ENCODE measurements at regions of chr18 and their contacts with region 1.

Region 1: DNA sequence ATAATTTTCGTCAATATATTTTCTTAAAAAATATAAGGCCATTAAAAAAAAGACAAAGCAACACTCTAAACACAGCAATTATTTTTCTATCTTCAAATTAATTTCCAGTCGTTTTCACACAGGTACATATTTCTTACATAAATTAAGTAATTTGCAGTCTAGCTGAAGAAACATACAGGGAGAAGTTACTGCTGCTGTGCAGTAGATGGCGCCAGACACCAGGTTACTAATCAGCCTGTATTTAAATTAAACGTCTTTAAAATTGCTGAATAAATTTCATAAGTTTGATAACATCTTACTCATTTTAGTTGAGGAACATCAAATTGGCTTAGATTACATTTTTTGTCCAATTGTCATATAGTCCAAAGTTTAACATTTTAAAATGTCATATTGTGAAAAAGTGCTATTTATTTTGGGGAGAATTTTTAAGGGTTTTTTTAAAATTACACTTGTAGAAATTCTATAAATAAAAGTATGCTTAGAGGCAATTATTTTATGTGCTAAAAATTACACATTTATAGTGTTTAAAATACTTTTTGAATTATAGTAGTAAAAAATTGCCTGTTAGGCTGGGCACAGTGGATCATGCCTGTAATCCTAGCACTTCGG is 88.4 kb downstream of the PMAIP1 start:
- DNase-seq: peak in 7 of 9 experiments; percentile 14 to 67 (median 40)
- ATAC-seq: peak; percentile 58
- H3K4me3 ChIP-seq: no peak overlapping the region
- H3K4me3 Mint-ChIP-seq: no peak overlapping the region
- H3K27ac ChIP-seq: no peak overlapping the region
- H3K27ac Mint-ChIP-seq: no peak overlapping the region
- H3K4me1 ChIP-seq: no peaks in the 10 kb centered on the region
- H3K4me1 Mint-ChIP-seq: no peaks in the 10 kb centered on the region
- H3K27me3 ChIP-seq: no peaks in the 10 kb centered on the region
- H3K27me3 Mint-ChIP-seq: peaks cover 8% of the 10 kb centered on the region
- CTCF ChIP-seq: peak; percentile 99

Region 2: GRCh38 chr18:59837586-59837985 is 150.6 kb before region 1 on chr18:
- CTCF ChIA-PET with region 1: interaction called, 3 read pairs
- POLR2A ChIA-PET with region 1: no interaction called
- intact Hi-C with region 1: loop called in 1 of 2 experiments (anchors 10 kb)
- DNase-seq: peak in 7 of 9 experiments; percentile 24 to 70 (median 46)
- ATAC-seq: no peak
- H3K4me3 ChIP-seq: no peak overlapping the region
- H3K4me3 Mint-ChIP-seq: no peak overlapping the region
- H3K27ac ChIP-seq: no peak overlapping the region
- H3K27ac Mint-ChIP-seq: no peak overlapping the region
- H3K4me1 ChIP-seq: no peaks in the 10 kb centered on the region
- H3K4me1 Mint-ChIP-seq: no peaks in the 10 kb centered on the region
- H3K27me3 ChIP-seq: no peaks in the 10 kb centered on the region
- H3K27me3 Mint-ChIP-seq: peaks cover 4% of the 10 kb centered on the region
- CTCF ChIP-seq: peak; percentile 91

Region 3: DNA sequence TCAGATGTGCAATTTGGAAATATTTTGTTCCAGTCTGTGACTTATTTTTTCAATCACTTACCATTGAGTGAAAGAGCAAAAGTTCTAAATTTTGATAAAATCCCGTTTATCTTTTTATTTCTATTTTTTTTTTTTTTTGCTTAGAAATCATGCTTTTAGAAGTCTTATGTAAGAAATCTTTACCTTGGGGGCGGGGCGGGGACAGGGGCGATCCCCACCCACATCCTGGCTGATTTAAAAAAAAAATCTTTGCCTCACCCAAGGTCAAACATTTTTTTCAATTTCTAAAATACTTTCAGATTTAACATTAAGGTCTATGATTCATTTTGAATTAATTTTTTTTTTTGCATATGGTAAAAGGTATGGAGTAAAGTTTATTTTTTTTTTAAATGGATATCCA is 47.9 kb after region 1 on chr18:
- CTCF ChIA-PET with region 1: no interaction called
- POLR2A ChIA-PET with region 1: no interaction called
- intact Hi-C with region 1: no loop called
- DNase-seq: no peak
- ATAC-seq: no peak
- H3K4me3 ChIP-seq: no peak overlapping the region
- H3K4me3 Mint-ChIP-seq: no peak overlapping the region
- H3K27ac ChIP-seq: no peak overlapping the region
- H3K27ac Mint-ChIP-seq: no peak overlapping the region
- H3K4me1 ChIP-seq: no peaks in the 10 kb centered on the region
- H3K4me1 Mint-ChIP-seq: no peaks in the 10 kb centered on the region
- H3K27me3 ChIP-seq: no peaks in the 10 kb centered on the region
- H3K27me3 Mint-ChIP-seq: peaks cover 5% of the 10 kb centered on the region
- CTCF ChIP-seq: no peak

Region 4: GRCh38 chr18:61502472-61502871 is 1514.3 kb after region 1 on chr18:
- CTCF ChIA-PET with region 1: interaction called, 6 read pairs
- POLR2A ChIA-PET with region 1: no interaction called
- intact Hi-C with region 1: loop called in 1 of 2 experiments (anchors 2 kb)
- DNase-seq: peak in 2 of 9 experiments; percentile 3 to 5
- ATAC-seq: no peak
- H3K4me3 ChIP-seq: no peak overlapping the region
- H3K4me3 Mint-ChIP-seq: no peak overlapping the region
- H3K27ac ChIP-seq: no peak overlapping the region
- H3K27ac Mint-ChIP-seq: no peak overlapping the region
- H3K4me1 ChIP-seq: no peaks in the 10 kb centered on the region
- H3K4me1 Mint-ChIP-seq: no peaks in the 10 kb centered on the region
- H3K27me3 ChIP-seq: no peaks in the 10 kb centered on the region
- H3K27me3 Mint-ChIP-seq: peaks cover 3% of the 10 kb centered on the region
- CTCF ChIP-seq: no peak

Region 5: DNA sequence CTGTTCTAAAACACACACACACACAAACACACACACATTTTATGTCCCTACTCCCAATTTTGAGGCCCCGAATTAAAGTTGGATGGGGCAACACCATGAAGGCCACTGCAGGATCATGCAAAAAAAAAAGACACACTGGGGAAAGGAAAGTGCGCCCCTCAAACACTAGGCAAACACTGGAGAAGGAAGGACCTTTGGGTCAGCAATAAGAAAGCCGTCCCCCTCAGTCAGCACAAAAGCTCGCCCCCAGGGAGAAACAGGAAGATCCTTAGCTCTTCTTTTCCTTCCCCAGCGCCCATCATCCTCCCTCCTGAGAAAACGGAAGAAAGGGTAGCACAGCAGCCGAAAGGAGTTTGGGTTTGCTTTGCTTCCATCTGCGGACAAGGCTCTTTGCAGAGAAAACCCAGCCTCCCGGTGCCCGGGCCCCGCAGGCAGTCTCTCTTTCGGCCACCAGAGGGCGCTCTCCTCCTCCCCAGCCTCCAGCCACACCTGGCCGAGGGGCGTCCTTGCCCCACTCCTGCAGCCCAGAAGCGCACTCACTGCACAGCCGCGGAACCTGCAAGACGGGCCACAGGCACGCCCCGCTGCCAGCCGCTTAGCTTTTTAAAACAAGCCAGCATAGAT is 1593.5 kb after region 1 on chr18:
- CTCF ChIA-PET with region 1: no interaction called
- POLR2A ChIA-PET with region 1: no interaction called
- intact Hi-C with region 1: loop called in 1 of 2 experiments (anchors 5 kb)
- DNase-seq: peak; percentile 27 to 80 (median 59)
- ATAC-seq: peak; percentile 65
- H3K4me3 ChIP-seq: no peak overlapping the region
- H3K4me3 Mint-ChIP-seq: no peak overlapping the region
- H3K27ac ChIP-seq: no peak overlapping the region
- H3K27ac Mint-ChIP-seq: no peak overlapping the region
- H3K4me1 ChIP-seq: peaks cover 8% of the 10 kb centered on the region
- H3K4me1 Mint-ChIP-seq: peaks cover 7% of the 10 kb centered on the region
- H3K27me3 ChIP-seq: peaks cover 0 to 6% of the 10 kb centered on the region in 2 experiments
- H3K27me3 Mint-ChIP-seq: peaks cover 32% of the 10 kb centered on the region
- CTCF ChIP-seq: peak; percentile 94

Region 6: GRCh38 chr18:61901323-61901986 is 1913.3 kb after region 1 on chr18:
- CTCF ChIA-PET with region 1: no interaction called
- POLR2A ChIA-PET with region 1: no interaction called
- intact Hi-C with region 1: loop called in 1 of 2 experiments (anchors 5 kb)
- DNase-seq: peak in 7 of 9 experiments; percentile 24 to 65 (median 44)
- ATAC-seq: peak; percentile 90
- H3K4me3 ChIP-seq: no peak overlapping the region
- H3K4me3 Mint-ChIP-seq: no peak overlapping the region
- H3K27ac ChIP-seq: no peak overlapping the region
- H3K27ac Mint-ChIP-seq: no peak overlapping the region
- H3K4me1 ChIP-seq: no peaks in the 10 kb centered on the region
- H3K4me1 Mint-ChIP-seq: no peaks in the 10 kb centered on the region
- H3K27me3 ChIP-seq: no peaks in the 10 kb centered on the region
- H3K27me3 Mint-ChIP-seq: peaks cover 29% of the 10 kb centered on the region
- CTCF ChIP-seq: peak; percentile 85